BJ (cell line): ENCODE measurements at regions of chr10 and their contacts with region 1.

Region 1: DNA sequence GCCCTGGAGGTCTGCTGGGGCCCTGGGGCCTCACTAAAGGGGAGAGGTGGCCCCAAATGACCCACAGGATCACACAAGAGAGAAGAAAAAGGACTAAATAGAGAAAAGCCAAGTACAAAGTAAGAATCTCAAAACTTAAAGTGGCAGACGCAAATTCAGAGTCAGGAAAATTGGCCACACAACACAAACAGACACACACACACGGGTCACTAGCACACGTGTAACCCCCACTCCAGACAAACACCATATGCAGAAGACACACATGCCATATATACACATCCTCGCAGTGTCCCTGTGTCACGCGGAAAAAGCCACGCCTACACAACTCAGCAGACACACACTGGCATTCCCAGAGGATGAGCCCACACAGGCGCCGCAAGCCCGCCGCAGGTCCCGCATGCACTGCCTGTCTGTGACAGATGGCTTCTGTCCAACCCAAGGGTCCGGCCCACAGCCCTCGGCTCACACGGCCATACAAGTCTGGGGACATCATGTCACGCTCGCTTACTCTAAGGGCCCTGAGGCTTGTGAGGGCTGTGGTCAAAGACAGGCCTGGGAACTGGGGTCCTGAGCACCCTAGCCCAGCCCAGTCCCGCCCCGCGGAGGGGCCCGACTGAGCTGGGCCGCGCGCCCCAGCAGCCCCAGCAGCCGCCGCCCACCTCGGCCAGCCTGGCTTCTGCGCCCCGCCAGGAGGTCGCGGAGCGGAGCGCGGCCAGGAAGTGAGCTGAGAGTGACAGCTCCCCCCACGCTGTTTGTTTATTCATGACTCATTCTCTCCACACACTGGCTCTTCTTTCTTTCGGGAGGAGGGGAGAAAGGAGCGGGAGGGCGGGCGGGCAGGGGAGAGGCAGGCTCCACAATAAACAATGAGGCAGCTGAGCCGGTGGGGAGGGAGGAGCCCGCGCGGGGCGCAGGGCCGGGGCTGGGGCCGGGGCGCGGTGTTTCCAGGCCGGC is 95.5 kb upstream of the ZMIZ1 start:
- DNase-seq: peak; percentile 68
- H3K4me3 ChIP-seq: peak overlapping the region; percentile 33
- H3K27me3 ChIP-seq: no peaks in the 10 kb centered on the region
- CTCF ChIP-seq: no peak

Region 2: DNA sequence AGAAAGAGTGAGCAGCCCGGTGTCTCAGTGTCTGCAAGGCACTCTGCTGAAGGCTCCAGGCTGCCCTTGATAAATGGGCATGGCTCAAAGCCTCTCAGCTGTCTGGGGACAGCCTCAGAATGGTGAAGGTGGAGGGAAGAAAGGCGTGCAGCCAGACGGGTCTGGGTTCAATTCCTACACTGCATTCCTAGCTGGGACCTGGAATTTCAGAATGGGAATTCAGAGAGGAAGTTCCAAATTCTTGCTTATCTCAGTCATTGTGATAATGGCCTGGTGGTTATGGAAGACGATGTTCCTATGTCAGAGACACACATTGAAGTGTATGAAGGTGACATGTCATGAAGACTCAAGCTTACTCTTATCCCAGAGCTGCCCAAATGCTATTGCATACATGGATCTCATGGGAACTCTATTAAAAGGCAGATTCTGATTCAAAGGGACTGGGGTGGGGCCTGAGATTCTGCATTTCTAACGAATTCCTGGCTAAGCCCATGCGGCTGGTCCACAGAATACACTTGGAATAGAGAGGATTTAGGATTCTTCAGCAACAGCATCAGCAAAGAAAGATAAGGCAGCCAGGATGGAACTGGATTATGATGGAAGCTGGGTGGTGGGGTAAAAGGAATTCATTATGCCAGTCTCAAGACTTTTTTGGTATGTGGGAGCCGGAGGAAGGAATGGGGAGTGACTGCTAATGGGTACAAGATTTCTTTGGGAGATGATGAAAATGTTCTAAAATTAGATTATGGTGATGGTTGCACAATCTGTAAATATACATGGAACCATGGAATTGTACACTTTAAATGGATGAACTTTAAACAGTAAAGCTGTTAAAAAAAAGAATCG is 13.0 kb after region 1 on chr10:
- CTCF ChIA-PET with region 1: interaction called, 22 read pairs
- POLR2A ChIA-PET with region 1: no interaction called
- DNase-seq: no peak
- H3K4me3 ChIP-seq: no peak overlapping the region
- H3K27me3 ChIP-seq: no peaks in the 10 kb centered on the region
- CTCF ChIP-seq: no peak